PC-3 (cell line): ENCODE measurements at regions of chr9 and their contacts with region 1.

Region 1: GRCh38 chr9:110672873-110673510 is 4.4 kb downstream of the MUSK start:
- DNase-seq: peak; percentile 13
- ATAC-seq: no peak
- H3K4me3 ChIP-seq: no peak overlapping the region
- H3K27ac ChIP-seq: peak overlapping the region; percentile 93
- H3K4me1 ChIP-seq: peaks cover 34% of the 10 kb centered on the region
- H3K27me3 ChIP-seq: no peaks in the 10 kb centered on the region
- CTCF ChIP-seq: no peak

Region 2: GRCh38 chr9:110278080-110278707 is 394.8 kb before region 1 on chr9:
- CTCF ChIA-PET with region 1: no interaction called
- POLR2A ChIA-PET with region 1: no interaction called
- intact Hi-C with region 1: no loop called
- DNase-seq: peak; percentile 31
- ATAC-seq: peak; percentile 38; the same call in 1 of the 2 replicates
- H3K4me3 ChIP-seq: no peak overlapping the region
- H3K27ac ChIP-seq: no peak overlapping the region
- H3K4me1 ChIP-seq: peaks cover 8% of the 10 kb centered on the region; the same call in 1 of the 2 replicates
- H3K27me3 ChIP-seq: no peaks in the 10 kb centered on the region
- CTCF ChIP-seq: no peak

Region 3: GRCh38 chr9:110509792-110510191 is 163.2 kb before region 1 on chr9:
- CTCF ChIA-PET with region 1: no interaction called
- POLR2A ChIA-PET with region 1: no interaction called
- intact Hi-C with region 1: no loop called
- DNase-seq: no peak
- ATAC-seq: no peak
- H3K4me3 ChIP-seq: no peak overlapping the region
- H3K27ac ChIP-seq: no peak overlapping the region
- H3K4me1 ChIP-seq: no peaks in the 10 kb centered on the region
- H3K27me3 ChIP-seq: no peaks in the 10 kb centered on the region
- CTCF ChIP-seq: no peak

Region 4: GRCh38 chr9:110650991-110651411 is 22.0 kb before region 1 on chr9:
- CTCF ChIA-PET with region 1: no interaction called
- POLR2A ChIA-PET with region 1: no interaction called
- intact Hi-C with region 1: loop called (anchors 1 kb)
- DNase-seq: peak; percentile 77
- ATAC-seq: peak; percentile 84
- H3K4me3 ChIP-seq: no peak overlapping the region
- H3K27ac ChIP-seq: peak overlapping the region; percentile 89
- H3K4me1 ChIP-seq: peaks cover 26% of the 10 kb centered on the region
- H3K27me3 ChIP-seq: no peaks in the 10 kb centered on the region
- CTCF ChIP-seq: no peak

Region 5: DNA sequence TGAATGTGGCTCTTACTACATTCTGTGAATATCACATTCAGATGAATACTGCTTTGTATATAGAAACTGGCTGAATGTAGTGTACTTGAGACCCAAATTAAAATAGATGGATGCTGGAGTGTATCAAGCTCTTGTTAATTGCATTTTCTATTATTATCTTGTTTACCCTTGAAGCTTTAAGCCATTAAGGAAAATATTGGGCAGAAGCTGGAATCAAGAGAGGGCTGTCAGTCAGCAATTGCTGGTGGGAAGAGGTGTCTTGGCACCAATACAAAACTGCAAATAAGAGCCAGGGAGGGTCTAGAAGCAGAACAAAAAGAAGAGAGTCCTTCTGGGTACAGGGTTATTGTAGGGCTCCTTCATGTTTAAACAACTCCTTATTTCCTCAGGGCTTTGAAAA is 34.4 kb after region 1 on chr9:
- CTCF ChIA-PET with region 1: no interaction called
- POLR2A ChIA-PET with region 1: no interaction called
- intact Hi-C with region 1: loop called (anchors 5 kb)
- DNase-seq: no peak
- ATAC-seq: no peak
- H3K4me3 ChIP-seq: no peak overlapping the region
- H3K27ac ChIP-seq: no peak overlapping the region
- H3K4me1 ChIP-seq: no peaks in the 10 kb centered on the region
- H3K27me3 ChIP-seq: no peaks in the 10 kb centered on the region
- CTCF ChIP-seq: no peak